Activated T-helper 2 cell treated with anti-CD3 and anti-CD28 coated beads, Interferon-gamma antibody, Interleukin-2, Interleukin-4, amounts not matched to agents 10 μg/mL and 5 μg/mL and 100 μg/mL, durations not matched to agents 14 hours and 24 hours and 36 hours (primary cell): ENCODE measurements at regions of chr4 and their contacts with region 1.

Region 1: GRCh38 chr4:113547487-113548042 is 214.0 kb downstream of the CAMK2D start:
- DNase-seq: peak; percentile 90
- H3K4me3 Mint-ChIP-seq: no peak overlapping the region
- H3K27ac Mint-ChIP-seq: peak overlapping the region; percentile 3
- H3K4me1 Mint-ChIP-seq: peaks cover 30% of the 10 kb centered on the region
- H3K27me3 Mint-ChIP-seq: no peaks in the 10 kb centered on the region

Region 2: GRCh38 chr4:113394730-113395530 is 152.6 kb before region 1 on chr4:
- intact Hi-C with region 1: loop called (anchors 2 kb)
- DNase-seq: peak; percentile 44
- H3K4me3 Mint-ChIP-seq: no peak overlapping the region
- H3K27ac Mint-ChIP-seq: no peak overlapping the region
- H3K4me1 Mint-ChIP-seq: peaks cover 3% of the 10 kb centered on the region
- H3K27me3 Mint-ChIP-seq: peaks cover 7% of the 10 kb centered on the region

Region 3: GRCh38 chr4:113423631-113424030 is 123.9 kb before region 1 on chr4:
- intact Hi-C with region 1: no loop called
- DNase-seq: no peak
- H3K4me3 Mint-ChIP-seq: no peak overlapping the region
- H3K27ac Mint-ChIP-seq: no peak overlapping the region
- H3K4me1 Mint-ChIP-seq: no peaks in the 10 kb centered on the region
- H3K27me3 Mint-ChIP-seq: peaks cover under 1% of the 10 kb centered on the region

Region 4: DNA sequence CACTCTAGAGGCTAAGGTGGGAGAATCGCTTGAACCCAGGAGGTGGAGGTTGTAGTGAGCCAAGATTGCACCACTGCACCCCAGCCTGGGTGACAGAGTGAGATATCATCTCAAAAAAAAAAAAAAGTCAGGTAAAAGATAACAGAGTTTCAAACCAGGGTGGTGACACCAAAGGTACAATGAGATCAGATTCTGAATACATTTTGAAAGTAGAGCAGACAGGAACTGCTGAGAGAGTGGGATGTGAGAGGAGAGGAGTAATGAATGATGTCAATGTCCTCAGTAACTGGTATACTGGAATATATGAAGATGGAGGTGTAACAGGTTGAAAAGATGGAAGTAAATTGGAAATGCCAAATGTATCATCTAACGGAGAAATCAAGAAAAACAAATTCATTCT is 78.3 kb after region 1 on chr4:
- intact Hi-C with region 1: loop called (anchors 1 kb)
- DNase-seq: no peak
- H3K4me3 Mint-ChIP-seq: peak overlapping the region; percentile 1
- H3K27ac Mint-ChIP-seq: peak overlapping the region; percentile 52
- H3K4me1 Mint-ChIP-seq: peaks cover 45% of the 10 kb centered on the region
- H3K27me3 Mint-ChIP-seq: no peaks in the 10 kb centered on the region

Region 5: GRCh38 chr4:113823291-113823659 is 275.7 kb after region 1 on chr4:
- intact Hi-C with region 1: loop called (anchors 2 kb)
- DNase-seq: no peak
- H3K4me3 Mint-ChIP-seq: no peak overlapping the region
- H3K27ac Mint-ChIP-seq: no peak overlapping the region
- H3K4me1 Mint-ChIP-seq: peaks cover 42% of the 10 kb centered on the region
- H3K27me3 Mint-ChIP-seq: peaks cover 6% of the 10 kb centered on the region

Region 6: DNA sequence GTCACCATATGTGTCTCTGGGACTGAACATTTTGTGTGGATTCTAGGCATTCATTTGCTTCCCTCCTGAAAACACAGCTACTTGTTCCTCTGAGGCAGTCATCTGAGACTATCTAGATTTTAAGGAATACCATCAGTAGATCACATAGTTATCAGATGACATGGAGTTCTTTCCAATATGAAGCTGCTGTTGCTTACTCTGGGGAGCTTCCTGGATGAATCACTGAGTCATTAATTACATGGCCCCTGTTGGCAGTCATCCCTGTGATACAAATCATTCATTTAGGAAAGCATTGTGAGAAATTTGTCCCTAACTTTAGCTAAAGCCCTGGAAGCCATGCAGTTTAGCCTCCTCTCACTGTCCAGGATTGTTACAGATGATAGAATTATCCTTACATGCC is 530.0 kb after region 1 on chr4:
- intact Hi-C with region 1: loop called (anchors 10 kb)
- DNase-seq: no peak
- H3K4me3 Mint-ChIP-seq: no peak overlapping the region
- H3K27ac Mint-ChIP-seq: no peak overlapping the region
- H3K4me1 Mint-ChIP-seq: no peaks in the 10 kb centered on the region
- H3K27me3 Mint-ChIP-seq: peaks cover 26% of the 10 kb centered on the region